CD4-positive, alpha-beta T cell (primary cell): ENCODE measurements at regions of chr11 and their contacts with region 1.

Region 1: GRCh38 chr11:46006418-46007070 is 84.1 kb downstream of the LARGE2 start:
- DNase-seq: peak in 5 of 14 experiments; percentile 13 to 77 (median 74)
- ATAC-seq: peak; percentile 76
- H3K4me3 ChIP-seq: no peak overlapping the region
- H3K4me3 Mint-ChIP-seq: no peak overlapping the region
- H3K27ac ChIP-seq: no peak overlapping the region
- H3K27ac Mint-ChIP-seq: no peak overlapping the region
- H3K4me1 ChIP-seq: no peaks in the 10 kb centered on the region
- H3K4me1 Mint-ChIP-seq: peaks cover 4% of the 10 kb centered on the region
- H3K27me3 ChIP-seq: no peaks in the 10 kb centered on the region
- H3K27me3 Mint-ChIP-seq: no peaks in the 10 kb centered on the region
- CTCF ChIP-seq: peak; percentile 85

Region 2: DNA sequence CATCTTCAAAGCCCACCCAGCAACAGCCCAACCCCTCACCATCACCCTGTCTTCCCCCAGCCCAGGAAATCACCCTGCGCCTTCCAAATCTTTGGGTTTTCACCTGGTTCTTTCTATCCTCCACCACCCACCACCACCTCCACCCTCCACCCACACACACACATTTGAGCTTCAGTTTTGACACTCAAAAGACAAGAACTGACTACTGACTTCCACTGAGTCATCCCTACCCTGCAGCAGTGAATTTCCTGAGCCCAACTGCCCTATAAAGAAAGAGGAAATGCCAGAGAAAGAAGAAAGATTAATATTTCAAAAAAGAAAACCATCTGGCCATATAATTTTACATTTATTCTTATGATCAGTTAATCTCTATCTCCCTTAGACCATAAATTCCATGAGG is 478.6 kb before region 1 on chr11:
- CTCF ChIA-PET with region 1: no interaction called
- POLR2A ChIA-PET with region 1: no interaction called
- intact Hi-C with region 1: no loop called
- DNase-seq: no peak
- ATAC-seq: no peak
- H3K4me3 ChIP-seq: no peak overlapping the region
- H3K4me3 Mint-ChIP-seq: no peak overlapping the region
- H3K27ac ChIP-seq: no peak overlapping the region
- H3K27ac Mint-ChIP-seq: no peak overlapping the region
- H3K4me1 ChIP-seq: no peaks in the 10 kb centered on the region
- H3K4me1 Mint-ChIP-seq: no peaks in the 10 kb centered on the region
- H3K27me3 ChIP-seq: peaks cover 5 to 6% of the 10 kb centered on the region in 2 experiments
- H3K27me3 Mint-ChIP-seq: peaks cover 10% of the 10 kb centered on the region
- CTCF ChIP-seq: no peak

Region 3: DNA sequence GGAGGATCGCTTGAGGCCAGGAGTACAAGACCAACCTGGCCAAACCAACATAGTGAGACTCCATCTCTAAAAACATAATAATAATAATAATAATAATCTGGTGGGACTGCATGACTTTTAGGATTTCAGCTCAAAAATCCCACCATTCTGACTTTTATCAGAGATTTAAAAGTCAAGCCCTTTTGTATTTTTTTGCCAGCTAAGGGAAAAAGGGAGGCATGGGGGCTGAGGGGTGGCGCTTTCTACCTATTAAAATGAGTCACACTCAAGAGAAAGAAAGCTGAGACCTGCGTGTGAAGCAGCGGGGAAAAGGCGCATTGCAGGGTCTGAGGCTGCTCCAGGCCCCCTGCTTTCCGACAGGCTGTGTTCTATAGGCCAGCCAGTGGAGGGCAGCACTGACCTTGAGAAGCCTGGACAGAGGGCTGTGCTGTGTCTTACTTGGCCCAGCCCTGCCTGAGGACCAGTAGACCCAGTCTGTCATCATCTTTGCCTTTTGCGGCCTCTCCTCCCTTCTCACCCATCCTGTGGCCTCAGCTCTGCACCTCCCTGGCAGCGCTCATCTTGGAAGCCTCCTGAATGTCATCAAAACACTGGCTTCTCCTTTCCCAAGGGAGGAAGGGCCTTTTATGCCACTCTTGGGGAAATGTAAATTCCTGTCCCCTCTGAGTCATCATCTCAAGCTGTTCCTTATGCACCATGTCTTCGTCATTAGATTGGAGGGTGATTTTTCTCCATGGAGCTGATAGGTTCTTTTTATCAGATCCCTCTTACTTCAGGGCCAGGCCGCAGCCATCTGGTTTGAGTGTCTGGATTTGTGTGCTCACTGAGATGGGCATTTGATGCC is 133.8 kb before region 1 on chr11:
- CTCF ChIA-PET with region 1: no interaction called
- POLR2A ChIA-PET with region 1: interaction called, 3 read pairs
- intact Hi-C with region 1: loop called (anchors 10 kb)
- DNase-seq: peak in 7 of 14 experiments; percentile 6 to 63 (median 19)
- ATAC-seq: peak; percentile 72
- H3K4me3 ChIP-seq: no peak overlapping the region
- H3K4me3 Mint-ChIP-seq: no peak overlapping the region
- H3K27ac ChIP-seq: no peak overlapping the region
- H3K27ac Mint-ChIP-seq: no peak overlapping the region
- H3K4me1 ChIP-seq: no peaks in the 10 kb centered on the region
- H3K4me1 Mint-ChIP-seq: no peaks in the 10 kb centered on the region
- H3K27me3 ChIP-seq: no peaks in the 10 kb centered on the region
- H3K27me3 Mint-ChIP-seq: no peaks in the 10 kb centered on the region
- CTCF ChIP-seq: peak; percentile 25

Region 4: DNA sequence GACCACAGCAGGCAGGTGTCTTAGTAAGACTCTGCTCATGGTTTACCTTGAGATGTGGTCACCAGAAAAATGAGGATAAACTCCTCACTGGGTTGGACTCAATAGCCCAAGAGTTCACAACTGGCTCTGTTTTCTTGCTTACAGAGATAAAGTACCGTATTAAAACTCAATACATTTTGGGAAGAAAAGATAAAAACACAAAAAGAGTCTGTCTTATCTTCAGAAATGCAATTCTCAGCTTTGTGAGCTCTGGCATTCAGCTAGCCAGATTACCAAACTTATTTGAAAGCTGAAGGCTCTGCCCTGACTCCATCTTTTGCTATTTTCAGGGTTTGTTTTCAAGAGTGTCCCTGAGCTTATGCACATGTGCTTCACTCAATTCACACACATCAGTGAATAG is 39.3 kb after region 1 on chr11:
- CTCF ChIA-PET with region 1: no interaction called
- POLR2A ChIA-PET with region 1: no interaction called
- intact Hi-C with region 1: no loop called
- DNase-seq: no peak
- ATAC-seq: no peak
- H3K4me3 ChIP-seq: no peak overlapping the region
- H3K4me3 Mint-ChIP-seq: no peak overlapping the region
- H3K27ac ChIP-seq: no peak overlapping the region
- H3K27ac Mint-ChIP-seq: no peak overlapping the region
- H3K4me1 ChIP-seq: no peaks in the 10 kb centered on the region
- H3K4me1 Mint-ChIP-seq: peaks cover 36% of the 10 kb centered on the region
- H3K27me3 ChIP-seq: no peaks in the 10 kb centered on the region
- H3K27me3 Mint-ChIP-seq: no peaks in the 10 kb centered on the region
- CTCF ChIP-seq: no peak

Region 5: DNA sequence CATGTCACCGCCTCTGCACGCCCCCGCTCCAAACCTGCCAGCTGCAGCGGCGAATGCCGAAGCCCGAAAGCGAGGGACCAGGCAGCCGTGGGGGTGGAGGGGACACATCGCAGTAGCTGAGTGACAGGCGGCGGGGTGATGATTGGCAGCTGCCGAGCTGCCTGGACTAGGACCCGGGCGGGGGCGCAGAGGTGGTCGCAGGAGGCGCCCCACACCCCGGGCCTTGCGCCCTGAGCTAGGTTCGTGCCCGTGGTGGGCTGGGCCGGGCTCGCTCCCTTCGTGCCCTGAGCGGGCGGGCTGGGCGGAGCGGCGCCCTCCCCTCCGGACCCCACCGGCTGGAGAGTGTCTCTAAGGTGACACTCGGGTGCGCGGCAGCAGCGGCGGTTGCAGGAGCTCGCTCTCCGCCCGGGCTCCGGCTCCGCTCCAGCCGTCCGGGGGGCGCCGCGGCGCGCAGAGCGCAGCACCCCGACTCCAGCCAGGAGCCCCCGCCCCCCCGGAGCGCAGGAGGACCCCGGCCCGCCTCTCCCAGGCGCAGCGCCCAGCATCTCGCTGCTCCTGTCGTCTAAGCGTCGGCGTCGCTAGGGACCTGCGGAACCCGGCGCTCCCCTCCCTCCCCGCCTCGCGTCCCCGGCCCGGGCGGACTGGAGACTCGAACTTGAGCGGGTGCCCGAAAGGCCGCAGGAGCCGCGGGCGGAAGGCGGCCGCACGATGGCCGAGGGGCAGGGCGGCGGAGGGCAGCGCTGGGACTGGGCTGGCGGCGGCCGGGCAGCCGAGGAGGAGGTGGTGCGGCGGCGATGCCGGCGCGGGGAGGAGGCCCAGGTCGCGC is 326.2 kb after region 1 on chr11:
- CTCF ChIA-PET with region 1: no interaction called
- POLR2A ChIA-PET with region 1: no interaction called
- intact Hi-C with region 1: no loop called
- DNase-seq: peak in 10 of 14 experiments; percentile 30 to 71 (median 54)
- ATAC-seq: peak; percentile 6
- H3K4me3 ChIP-seq: peak overlapping the region; percentile 71
- H3K4me3 Mint-ChIP-seq: peak overlapping the region; percentile 94
- H3K27ac ChIP-seq: peak overlapping the region in 1 of 2 donors; percentile 73
- H3K27ac Mint-ChIP-seq: peak overlapping the region; percentile 91
- H3K4me1 ChIP-seq: peaks cover 80% of the 10 kb centered on the region
- H3K4me1 Mint-ChIP-seq: peaks cover 76% of the 10 kb centered on the region
- H3K27me3 ChIP-seq: peaks cover 0 to 5% of the 10 kb centered on the region in 2 experiments
- H3K27me3 Mint-ChIP-seq: no peaks in the 10 kb centered on the region
- CTCF ChIP-seq: no peak